ENCODE measurements at regions of chr18 and their contacts with region 1.

Region 1: GRCh38 chr18:26307189-26307773 is 81.0 kb downstream of the TAF4B start:
- DNase-seq: peak; percentile 30
- ATAC-seq: peak; percentile 86
- H3K4me3 ChIP-seq: no peak overlapping the region
- H3K27ac ChIP-seq: no peak overlapping the region
- H3K4me1 ChIP-seq: no peaks in the 10 kb centered on the region
- H3K27me3 ChIP-seq: no peaks in the 10 kb centered on the region
- CTCF ChIP-seq: peak; percentile 77; the same call in 1 of the 2 replicates

Region 2: GRCh38 chr18:26271917-26272549 is 35.2 kb before region 1 on chr18:
- CTCF ChIA-PET with region 1: no interaction called
- POLR2A ChIA-PET with region 1: no interaction called
- in situ Hi-C with region 1: no loop called
- intact Hi-C with region 1: no loop called
- DNase-seq: no peak
- ATAC-seq: no peak
- H3K4me3 ChIP-seq: no peak overlapping the region
- H3K27ac ChIP-seq: no peak overlapping the region
- H3K4me1 ChIP-seq: no peaks in the 10 kb centered on the region
- H3K27me3 ChIP-seq: no peaks in the 10 kb centered on the region
- CTCF ChIP-seq: no peak

Region 3: DNA sequence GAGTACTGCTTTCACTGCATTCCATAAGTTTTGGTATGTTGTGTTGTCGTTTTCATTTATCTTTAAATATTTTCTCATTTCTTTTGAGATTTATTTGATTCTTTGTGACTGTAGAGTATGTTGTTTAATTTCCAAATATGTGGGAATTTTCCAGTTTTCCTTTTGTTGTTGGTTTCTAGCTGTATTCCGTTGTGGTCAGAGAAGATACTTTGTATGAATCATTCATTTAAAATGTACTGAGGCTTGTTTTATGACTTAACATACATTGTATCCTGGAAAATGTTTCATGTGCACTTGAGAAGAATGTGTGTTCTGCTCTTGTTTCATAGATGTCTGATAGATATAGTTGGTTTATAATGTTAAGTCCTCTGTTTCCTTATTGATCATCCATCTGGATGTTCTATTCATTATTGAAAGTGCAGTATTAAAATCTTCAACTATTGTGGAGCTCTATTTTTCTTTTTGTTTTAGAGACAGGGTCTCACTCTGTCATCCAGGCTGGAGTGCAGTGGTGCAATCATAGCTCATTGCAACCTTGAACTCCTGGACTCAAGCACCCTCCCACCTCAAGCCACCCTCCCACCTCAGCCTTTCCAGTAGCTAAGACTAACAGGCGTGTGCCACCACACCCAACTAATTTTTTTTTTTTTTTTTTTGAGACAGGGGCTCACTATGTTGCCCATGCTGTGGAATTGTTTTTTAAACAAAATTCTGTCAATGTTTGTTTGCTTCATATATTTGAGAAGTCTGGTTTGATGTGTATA is 15.8 kb after region 1 on chr18:
- CTCF ChIA-PET with region 1: no interaction called
- POLR2A ChIA-PET with region 1: no interaction called
- in situ Hi-C with region 1: no loop called
- intact Hi-C with region 1: no loop called
- DNase-seq: no peak
- ATAC-seq: no peak
- H3K4me3 ChIP-seq: no peak overlapping the region
- H3K27ac ChIP-seq: no peak overlapping the region
- H3K4me1 ChIP-seq: no peaks in the 10 kb centered on the region
- H3K27me3 ChIP-seq: no peaks in the 10 kb centered on the region
- CTCF ChIP-seq: no peak

Region 4: DNA sequence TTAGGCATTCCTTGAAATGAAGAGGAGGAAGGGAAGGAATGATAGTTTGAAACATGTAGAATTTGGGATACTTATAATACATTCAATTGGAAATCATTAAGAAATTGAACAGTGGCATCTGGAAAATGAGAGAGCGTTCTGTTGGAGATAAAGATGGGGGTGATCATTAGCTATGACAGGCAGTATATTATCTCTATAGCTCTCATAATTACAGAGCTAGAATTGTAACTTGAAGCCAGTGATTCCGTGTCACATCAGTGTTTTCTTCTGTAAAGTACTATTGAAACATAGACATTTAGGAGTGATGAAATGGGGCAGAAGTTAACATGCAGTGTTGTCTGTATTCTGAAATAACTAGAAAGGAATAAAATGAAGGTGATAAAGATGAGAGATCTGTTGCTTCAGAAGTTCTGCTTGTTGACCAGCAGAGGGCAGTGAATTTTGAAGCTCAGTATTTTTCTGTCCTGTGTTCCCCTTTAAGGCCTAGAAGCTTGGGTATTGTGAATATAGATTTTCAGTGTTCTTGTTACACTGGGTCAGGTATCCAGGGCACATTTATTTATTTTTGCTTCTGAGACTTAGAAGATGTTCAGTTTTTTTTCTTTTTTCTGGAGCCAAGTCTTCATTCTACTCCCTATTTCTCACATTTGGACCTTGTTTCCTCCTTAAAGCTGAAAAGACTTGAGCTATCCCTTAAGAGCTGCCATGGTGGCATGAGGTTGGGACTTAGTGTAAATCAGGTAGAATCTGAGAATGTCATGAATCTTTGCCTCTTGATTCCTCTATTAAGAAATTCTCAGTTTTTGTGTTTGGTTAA is 76.4 kb after region 1 on chr18:
- CTCF ChIA-PET with region 1: interaction called, 3 read pairs
- POLR2A ChIA-PET with region 1: interaction called, 15 read pairs
- in situ Hi-C with region 1: no loop called
- intact Hi-C with region 1: no loop called
- DNase-seq: peak; percentile 15
- ATAC-seq: peak; percentile 78; the same call in 1 of the 2 replicates
- H3K4me3 ChIP-seq: no peak overlapping the region
- H3K27ac ChIP-seq: peak overlapping the region; percentile 60; the same call in 1 of the 2 replicates
- H3K4me1 ChIP-seq: peaks cover 7% of the 10 kb centered on the region; the same call in 1 of the 2 replicates
- H3K27me3 ChIP-seq: no peaks in the 10 kb centered on the region
- CTCF ChIP-seq: peak; percentile 71; the same call in 1 of the 2 replicates

Region 5: DNA sequence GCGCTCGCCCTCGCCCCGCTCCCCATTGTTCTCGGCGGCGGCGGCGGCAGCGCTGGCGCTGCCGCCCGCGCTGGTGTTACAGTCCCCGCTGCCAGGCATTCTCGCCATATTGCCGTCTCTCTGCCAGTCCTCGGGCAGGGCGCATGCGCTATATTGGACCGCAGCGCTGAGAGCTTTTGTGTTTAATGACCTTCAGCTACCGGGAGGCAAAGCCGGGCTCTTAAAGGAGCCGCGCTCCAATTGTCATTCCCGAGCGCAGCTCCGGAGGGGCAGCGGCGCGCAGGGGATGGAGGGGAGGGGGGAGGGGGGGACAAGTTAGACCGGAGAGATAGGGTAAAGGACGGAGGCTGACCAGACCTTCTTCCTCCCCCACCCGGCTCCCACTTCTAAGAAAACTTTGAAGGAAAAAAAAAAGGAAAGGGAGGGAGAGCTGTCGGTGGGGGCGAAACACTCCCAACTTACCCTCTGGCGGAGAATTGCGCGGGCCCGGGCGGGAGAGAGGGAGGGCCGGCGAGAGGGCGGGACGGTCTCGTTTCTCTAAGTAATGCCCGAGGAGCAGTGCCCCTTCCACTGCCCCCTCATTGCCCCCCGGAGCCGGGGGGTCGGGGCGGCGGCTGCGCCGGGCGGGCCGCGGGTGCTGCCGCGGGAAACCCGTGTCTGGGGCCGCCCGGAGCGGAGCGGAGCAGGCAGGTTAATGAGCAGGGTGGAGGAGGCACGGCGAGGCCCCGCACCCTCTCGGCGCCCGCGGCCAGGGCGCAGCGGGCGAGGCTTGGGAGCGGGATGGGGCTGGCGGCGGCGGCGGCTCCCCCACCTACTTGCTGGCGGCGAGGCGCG is 241.4 kb after region 1 on chr18 and contains the start of gene KCTD1:
- CTCF ChIA-PET with region 1: interaction called, 5 read pairs
- POLR2A ChIA-PET with region 1: no interaction called
- in situ Hi-C with region 1: no loop called
- intact Hi-C with region 1: loop called (anchors 5 kb)
- DNase-seq: peak; percentile 30
- ATAC-seq: peak; percentile 67
- H3K4me3 ChIP-seq: peak within 1 kb of the TSS; percentile 71 to 77
- H3K27ac ChIP-seq: peak within 1 kb of the TSS; percentile 85
- H3K4me1 ChIP-seq: peaks cover 18% of the 10 kb centered on the region
- H3K27me3 ChIP-seq: no peaks in the 10 kb centered on the region
- CTCF ChIP-seq: no peak
- total RNA-seq, gene KCTD1: 34.4 TPM

Region 6: GRCh38 chr18:26593365-26594320 is 286.4 kb after region 1 on chr18:
- CTCF ChIA-PET with region 1: no interaction called
- POLR2A ChIA-PET with region 1: no interaction called
- in situ Hi-C with region 1: no loop called
- intact Hi-C with region 1: no loop called
- DNase-seq: no peak
- ATAC-seq: no peak
- H3K4me3 ChIP-seq: no peak overlapping the region
- H3K27ac ChIP-seq: no peak overlapping the region
- H3K4me1 ChIP-seq: no peaks in the 10 kb centered on the region
- H3K27me3 ChIP-seq: no peaks in the 10 kb centered on the region
- CTCF ChIP-seq: no peak

Region 7: GRCh38 chr18:26656944-26657536 is 349.8 kb after region 1 on chr18:
- CTCF ChIA-PET with region 1: interaction called, 3 read pairs
- POLR2A ChIA-PET with region 1: no interaction called
- in situ Hi-C with region 1: no loop called
- intact Hi-C with region 1: loop called (anchors 10 kb)
- DNase-seq: no peak
- ATAC-seq: peak; percentile 88
- H3K4me3 ChIP-seq: peak overlapping the region; percentile 62 to 70
- H3K27ac ChIP-seq: peak overlapping the region; percentile 48; the same call in 1 of the 2 replicates
- H3K4me1 ChIP-seq: peaks cover 10% of the 10 kb centered on the region
- H3K27me3 ChIP-seq: peaks cover 49% of the 10 kb centered on the region
- CTCF ChIP-seq: peak; percentile 40

Region 8: DNA sequence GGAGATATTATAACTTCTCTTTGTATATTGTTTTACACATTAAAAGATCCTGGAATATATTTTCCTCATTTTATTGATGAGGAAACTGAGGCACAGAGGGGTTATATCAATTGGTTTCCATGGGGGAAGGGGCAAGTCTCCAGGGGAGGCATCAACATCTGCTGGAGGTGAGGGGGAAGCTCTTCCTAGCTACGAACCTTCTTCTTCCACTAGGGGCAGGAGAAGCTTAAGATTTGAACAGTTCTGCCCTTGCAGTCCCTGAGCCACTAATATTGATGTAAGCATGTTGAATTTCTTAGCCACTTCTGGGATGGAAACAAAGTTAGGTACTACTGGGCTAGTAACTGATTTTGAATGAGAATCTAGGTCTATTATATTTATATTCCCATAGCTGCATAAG is 698.3 kb after region 1 on chr18:
- CTCF ChIA-PET with region 1: no interaction called
- POLR2A ChIA-PET with region 1: no interaction called
- in situ Hi-C with region 1: no loop called
- intact Hi-C with region 1: loop called (anchors 5 kb)
- DNase-seq: no peak
- ATAC-seq: peak; percentile 85
- H3K4me3 ChIP-seq: no peak overlapping the region
- H3K27ac ChIP-seq: no peak overlapping the region
- H3K4me1 ChIP-seq: no peaks in the 10 kb centered on the region
- H3K27me3 ChIP-seq: peaks cover 5% of the 10 kb centered on the region; the same call in 1 of the 2 replicates
- CTCF ChIP-seq: peak; percentile 77